ENCODE measurements at regions of chr16 and their contacts with region 1.

Region 1: GRCh38 chr16:4253394-4254150 is 11.7 kb upstream of the SRL start:
- DNase-seq: peak; percentile 98 to 100 (median 99)
- ATAC-seq: peak; percentile 96
- H3K4me3 ChIP-seq: peak overlapping the region; percentile 81 to 92
- H3K4me3 Mint-ChIP-seq: peak overlapping the region; percentile 93
- H3K27ac ChIP-seq: peak overlapping the region; percentile 88 to 89
- H3K27ac Mint-ChIP-seq: peak overlapping the region; percentile 98
- H3K4me1 ChIP-seq: peaks cover 6% of the 10 kb centered on the region
- H3K4me1 Mint-ChIP-seq: peaks cover 7% of the 10 kb centered on the region
- H3K27me3 ChIP-seq: no peaks in the 10 kb centered on the region
- H3K27me3 Mint-ChIP-seq: no peaks in the 10 kb centered on the region
- CTCF ChIP-seq: no peak

Region 2: GRCh38 chr16:2673066-2673999 is 1580.2 kb before region 1 on chr16:
- CTCF ChIA-PET with region 1: no interaction called
- POLR2A ChIA-PET with region 1: no interaction called
- intact Hi-C with region 1: loop called in 1 of 2 experiments (anchors 10 kb)
- DNase-seq: peak; percentile 91 to 98 (median 95)
- ATAC-seq: peak; percentile 92
- H3K4me3 ChIP-seq: peak overlapping the region; percentile 80 to 94
- H3K4me3 Mint-ChIP-seq: peak overlapping the region; percentile 84
- H3K27ac ChIP-seq: peak overlapping the region; percentile 76 to 78
- H3K27ac Mint-ChIP-seq: peak overlapping the region; percentile 80
- H3K4me1 ChIP-seq: peaks cover 14% of the 10 kb centered on the region
- H3K4me1 Mint-ChIP-seq: peaks cover 35% of the 10 kb centered on the region
- H3K27me3 ChIP-seq: no peaks in the 10 kb centered on the region
- H3K27me3 Mint-ChIP-seq: no peaks in the 10 kb centered on the region
- CTCF ChIP-seq: no peak

Region 3: GRCh38 chr16:3880623-3881498 is 372.7 kb before region 1 on chr16 and contains the start of gene CREBBP:
- CTCF ChIA-PET with region 1: no interaction called
- POLR2A ChIA-PET with region 1: interaction called, 3 read pairs
- intact Hi-C with region 1: loop called in 1 of 2 experiments (anchors 1 kb)
- DNase-seq: peak; percentile 80 to 95 (median 87)
- ATAC-seq: peak; percentile 84
- H3K4me3 ChIP-seq: peak within 1 kb of the TSS; percentile 70 to 80
- H3K4me3 Mint-ChIP-seq: peak within 1 kb of the TSS; percentile 88
- H3K27ac ChIP-seq: peak within 1 kb of the TSS in 1 of 2 experiments; percentile 71
- H3K27ac Mint-ChIP-seq: peak within 1 kb of the TSS; percentile 94
- H3K4me1 ChIP-seq: peaks cover 32% of the 10 kb centered on the region
- H3K4me1 Mint-ChIP-seq: peaks cover 38% of the 10 kb centered on the region
- H3K27me3 ChIP-seq: no peaks in the 10 kb centered on the region
- H3K27me3 Mint-ChIP-seq: peaks cover 2% of the 10 kb centered on the region
- CTCF ChIP-seq: no peak
- total RNA-seq, gene CREBBP: 186 to 189 TPM

Region 4: GRCh38 chr16:3983081-3983520 is 270.5 kb before region 1 on chr16:
- CTCF ChIA-PET with region 1: interaction called, 15 read pairs
- POLR2A ChIA-PET with region 1: no interaction called
- intact Hi-C with region 1: no loop called
- DNase-seq: peak in 8 of 9 experiments; percentile 9 to 68 (median 48)
- ATAC-seq: peak; percentile 48
- H3K4me3 ChIP-seq: no peak overlapping the region
- H3K4me3 Mint-ChIP-seq: no peak overlapping the region
- H3K27ac ChIP-seq: no peak overlapping the region
- H3K27ac Mint-ChIP-seq: no peak overlapping the region
- H3K4me1 ChIP-seq: peaks cover 4% of the 10 kb centered on the region
- H3K4me1 Mint-ChIP-seq: peaks cover 4% of the 10 kb centered on the region
- H3K27me3 ChIP-seq: no peaks in the 10 kb centered on the region
- H3K27me3 Mint-ChIP-seq: no peaks in the 10 kb centered on the region
- CTCF ChIP-seq: peak; percentile 31

Region 5: GRCh38 chr16:4271176-4272066 is 17.8 kb after region 1 on chr16:
- CTCF ChIA-PET with region 1: interaction called, 35 read pairs
- POLR2A ChIA-PET with region 1: interaction called, 52 read pairs
- intact Hi-C with region 1: loop called (anchors 1 kb)
- DNase-seq: peak; percentile 72 to 93 (median 89)
- ATAC-seq: peak; percentile 84
- H3K4me3 ChIP-seq: peak overlapping the region; percentile 91 to 99
- H3K4me3 Mint-ChIP-seq: peak overlapping the region; percentile 88
- H3K27ac ChIP-seq: peak overlapping the region; percentile 50 to 76
- H3K27ac Mint-ChIP-seq: peak overlapping the region; percentile 57
- H3K4me1 ChIP-seq: peaks cover 13% of the 10 kb centered on the region
- H3K4me1 Mint-ChIP-seq: peaks cover 15% of the 10 kb centered on the region
- H3K27me3 ChIP-seq: no peaks in the 10 kb centered on the region
- H3K27me3 Mint-ChIP-seq: no peaks in the 10 kb centered on the region
- CTCF ChIP-seq: no peak

Region 6: GRCh38 chr16:4416200-4417032 is 162.8 kb after region 1 on chr16 and contains the start of gene CORO7:
- CTCF ChIA-PET with region 1: interaction called, 3 read pairs
- POLR2A ChIA-PET with region 1: interaction called, 3 read pairs
- intact Hi-C with region 1: loop called in 1 of 2 experiments (anchors 1 kb)
- DNase-seq: peak; percentile 98 to 100 (median 99)
- ATAC-seq: peak; percentile 78
- H3K4me3 ChIP-seq: peak within 1 kb of the TSS; percentile 51 to 60
- H3K4me3 Mint-ChIP-seq: peak within 1 kb of the TSS; percentile 97
- H3K27ac ChIP-seq: peak within 1 kb of the TSS; percentile 89 to 94
- H3K27ac Mint-ChIP-seq: peak within 1 kb of the TSS; percentile 99
- H3K4me1 ChIP-seq: peaks cover 44% of the 10 kb centered on the region
- H3K4me1 Mint-ChIP-seq: peaks cover 33% of the 10 kb centered on the region
- H3K27me3 ChIP-seq: no peaks in the 10 kb centered on the region
- H3K27me3 Mint-ChIP-seq: no peaks in the 10 kb centered on the region
- CTCF ChIP-seq: no peak
- total RNA-seq, gene CORO7: 950 to 991 TPM

Measured in CD8-positive, alpha-beta T cell (primary cell).